T-cell (primary cell): ENCODE measurements at regions of chr2 and their contacts with region 1.

Region 1: DNA sequence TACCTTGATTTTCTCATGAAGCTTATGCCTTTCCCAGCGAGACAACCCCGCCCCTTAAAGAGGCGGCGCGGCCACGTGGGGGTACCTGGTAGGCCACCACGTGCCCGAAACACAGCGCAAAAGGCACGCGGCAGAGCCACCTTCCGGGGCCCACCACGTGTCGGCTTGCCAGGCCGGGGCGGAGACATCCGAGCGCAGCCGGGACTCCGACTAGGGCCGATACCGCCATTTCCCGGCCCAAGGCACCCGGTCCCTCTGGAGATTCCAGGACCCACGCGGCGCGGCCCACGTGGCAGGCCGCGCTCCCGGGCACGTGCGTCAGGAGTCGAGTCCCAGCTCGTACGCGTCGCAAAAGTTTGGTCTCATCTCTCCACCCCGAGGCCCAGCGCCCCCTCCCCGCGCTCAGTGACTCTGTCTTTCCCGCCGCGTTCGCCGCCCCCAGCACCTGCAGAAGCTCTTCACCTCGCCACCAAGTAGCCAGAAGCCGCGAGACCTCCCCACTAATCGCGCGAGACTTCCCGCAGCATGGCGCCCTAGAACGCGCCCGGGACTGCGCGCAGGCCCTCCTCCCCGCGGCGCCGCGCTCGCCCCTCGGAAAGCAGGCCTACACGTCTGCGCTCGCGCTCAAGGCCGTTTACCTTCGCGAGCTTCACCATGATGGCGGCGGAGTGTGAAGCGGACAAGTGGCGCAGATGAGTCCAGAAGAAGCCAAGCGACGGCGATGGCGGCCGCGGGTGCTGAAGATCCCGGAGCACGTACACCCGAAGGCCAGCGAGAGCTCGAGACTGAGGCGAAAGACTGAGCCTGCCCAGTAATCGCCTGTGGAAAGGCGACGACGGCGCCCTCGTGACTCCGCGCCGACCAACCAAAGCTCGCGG is at the start of gene NCL:
- DNase-seq: peak; percentile 54 to 92 (median 88)
- ATAC-seq: peak; percentile 71 to 91 (median 89)
- H3K4me3 ChIP-seq: peak within 1 kb of the TSS; percentile 89 to 91
- H3K4me3 Mint-ChIP-seq: peak within 1 kb of the TSS; percentile 94 to 97 (median 95)
- H3K27ac ChIP-seq: peak within 1 kb of the TSS; percentile 99
- H3K27ac Mint-ChIP-seq: peak within 1 kb of the TSS; percentile 98 to 99
- H3K4me1 ChIP-seq: peaks cover 20 to 39% of the 10 kb centered on the region in 2 experiments
- H3K4me1 Mint-ChIP-seq: peaks cover 44 to 58% (median 46%) of the 10 kb centered on the region in 3 donors
- H3K27me3 ChIP-seq: no peaks in the 10 kb centered on the region
- H3K27me3 Mint-ChIP-seq: no peaks in the 10 kb centered on the region
- total RNA-seq, gene NCL: 358 to 468 (median 397) TPM

Region 2: GRCh38 chr2:230471074-230471473 is 992.9 kb before region 1 on chr2:
- CTCF ChIA-PET with region 1: no interaction called
- POLR2A ChIA-PET with region 1: no interaction called
- DNase-seq: no peak
- ATAC-seq: no peak
- H3K4me3 ChIP-seq: no peak overlapping the region
- H3K4me3 Mint-ChIP-seq: no peak overlapping the region
- H3K27ac ChIP-seq: no peak overlapping the region
- H3K27ac Mint-ChIP-seq: peak overlapping the region; percentile 71 to 92
- H3K4me1 ChIP-seq: peaks cover 6 to 18% of the 10 kb centered on the region in 2 experiments
- H3K4me1 Mint-ChIP-seq: peaks cover 37 to 54% (median 42%) of the 10 kb centered on the region in 3 donors
- H3K27me3 ChIP-seq: no peaks in the 10 kb centered on the region
- H3K27me3 Mint-ChIP-seq: no peaks in the 10 kb centered on the region

Region 3: GRCh38 chr2:231482806-231483391 is 19.0 kb after region 1 on chr2:
- CTCF ChIA-PET with region 1: interaction called, 5 to 22 read pairs
- POLR2A ChIA-PET with region 1: interaction called, 4 to 12 read pairs
- DNase-seq: peak; percentile 25 to 81 (median 59)
- ATAC-seq: peak; percentile 78 to 88 (median 84)
- H3K4me3 ChIP-seq: peak overlapping the region; percentile 56 to 58
- H3K4me3 Mint-ChIP-seq: peak overlapping the region; percentile 73 to 81 (median 78)
- H3K27ac ChIP-seq: peak overlapping the region; percentile 78
- H3K27ac Mint-ChIP-seq: peak overlapping the region; percentile 87 to 89
- H3K4me1 ChIP-seq: peaks cover 0 to 23% of the 10 kb centered on the region in 2 experiments
- H3K4me1 Mint-ChIP-seq: peaks cover 7 to 20% (median 19%) of the 10 kb centered on the region in 3 donors
- H3K27me3 ChIP-seq: no peaks in the 10 kb centered on the region
- H3K27me3 Mint-ChIP-seq: no peaks in the 10 kb centered on the region

Region 4: GRCh38 chr2:231514103-231514950 is 50.4 kb after region 1 on chr2:
- CTCF ChIA-PET with region 1: interaction called, 3 to 10 read pairs
- POLR2A ChIA-PET with region 1: interaction called, 4 to 12 read pairs
- DNase-seq: peak; percentile 93 to 99 (median 98)
- ATAC-seq: peak; percentile 97 to 99 (median 98)
- H3K4me3 ChIP-seq: peak overlapping the region; percentile 79 to 84
- H3K4me3 Mint-ChIP-seq: peak overlapping the region; percentile 78 to 89 (median 88)
- H3K27ac ChIP-seq: peak overlapping the region; percentile 97
- H3K27ac Mint-ChIP-seq: peak overlapping the region; percentile 97 to 98
- H3K4me1 ChIP-seq: peaks cover 0 to 13% of the 10 kb centered on the region in 2 experiments
- H3K4me1 Mint-ChIP-seq: peaks cover 16 to 18% (median 18%) of the 10 kb centered on the region in 3 donors
- H3K27me3 ChIP-seq: no peaks in the 10 kb centered on the region
- H3K27me3 Mint-ChIP-seq: no peaks in the 10 kb centered on the region

Region 5: DNA sequence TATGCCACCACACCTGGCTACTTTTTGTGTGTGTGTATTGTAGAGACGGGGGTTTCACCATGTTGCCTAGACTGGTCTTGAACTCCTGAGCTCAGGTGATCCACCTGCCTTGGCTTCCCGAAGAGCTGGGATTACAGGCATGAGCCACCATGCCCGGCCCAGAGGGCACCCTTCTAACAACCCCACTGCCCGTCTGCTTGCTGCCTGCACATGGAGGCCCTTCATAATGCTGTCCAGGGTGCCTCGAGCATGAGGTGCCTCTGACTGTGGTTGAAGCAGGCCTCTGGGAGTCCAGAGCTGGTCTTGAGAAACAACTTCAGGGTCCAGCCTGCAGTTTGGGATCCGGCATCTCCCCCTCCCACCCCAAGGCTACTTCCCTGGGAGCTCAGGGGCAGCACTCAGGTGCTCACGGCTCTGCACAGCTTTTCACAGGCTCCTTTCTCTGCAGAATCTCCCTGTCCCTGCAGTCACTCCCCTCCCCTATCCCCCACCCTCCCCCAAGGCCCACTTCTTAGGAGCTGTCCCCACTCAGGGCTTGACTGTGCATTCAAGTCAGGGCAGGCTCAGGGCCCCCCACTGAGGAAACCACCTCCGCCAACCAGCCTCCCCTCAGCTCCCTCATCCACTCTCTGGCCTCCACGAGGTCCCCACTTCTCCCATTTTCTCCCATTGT is 58.3 kb after region 1 on chr2:
- CTCF ChIA-PET with region 1: interaction called, 3 to 10 read pairs
- POLR2A ChIA-PET with region 1: interaction called, 3 to 10 read pairs
- DNase-seq: no peak
- ATAC-seq: no peak
- H3K4me3 ChIP-seq: no peak overlapping the region
- H3K4me3 Mint-ChIP-seq: no peak overlapping the region
- H3K27ac ChIP-seq: no peak overlapping the region
- H3K27ac Mint-ChIP-seq: no peak overlapping the region
- H3K4me1 ChIP-seq: peaks cover 0 to 46% of the 10 kb centered on the region in 2 experiments
- H3K4me1 Mint-ChIP-seq: peaks cover 23 to 48% (median 27%) of the 10 kb centered on the region in 3 donors
- H3K27me3 ChIP-seq: no peaks in the 10 kb centered on the region
- H3K27me3 Mint-ChIP-seq: no peaks in the 10 kb centered on the region